K562 (cell line): ENCODE measurements at regions of chr5 and their contacts with region 1.

Region 1: DNA sequence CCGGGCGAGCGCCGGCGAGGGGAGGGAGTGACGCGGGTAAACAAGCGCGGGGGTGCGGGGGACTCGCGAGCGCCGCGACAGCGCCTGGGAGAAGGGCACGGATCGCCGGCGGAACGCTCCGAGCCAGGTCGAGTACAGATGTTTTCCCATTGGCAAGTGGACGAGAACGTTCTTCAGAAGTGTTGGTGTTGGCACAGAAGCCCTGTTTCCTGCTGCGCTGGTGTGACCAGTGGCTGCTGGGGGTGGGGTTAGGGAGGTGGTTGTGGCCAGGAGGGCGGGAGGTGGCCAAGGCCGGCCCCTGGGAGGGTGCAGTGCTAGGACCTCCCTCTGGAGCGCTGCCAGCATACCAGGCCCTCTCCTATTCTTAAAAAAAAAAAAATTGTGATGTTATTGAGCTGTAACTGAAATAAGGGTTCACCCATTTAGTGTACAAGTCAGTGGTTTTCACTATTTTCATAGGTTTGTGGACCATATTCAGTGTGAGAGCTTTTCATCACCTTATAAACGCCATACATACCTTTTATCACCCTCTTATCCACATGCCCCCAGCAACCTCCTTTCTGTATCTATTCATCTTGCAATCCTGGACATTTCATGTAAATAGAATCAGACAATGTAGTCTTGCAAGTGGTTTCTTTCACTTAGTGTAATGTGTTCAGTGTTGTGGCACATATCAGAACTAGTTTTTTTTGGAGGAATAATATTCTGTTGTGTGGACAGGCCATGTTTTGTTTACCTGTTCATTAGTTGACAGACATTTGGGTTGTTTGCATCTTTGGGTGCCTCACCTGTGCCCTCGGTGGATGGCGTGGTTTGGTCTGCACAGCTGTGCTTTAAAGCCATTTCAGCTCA is 1.1 kb downstream of the SQSTM1 start:
- DNase-seq: peak; percentile 81 to 95 (median 88)
- ATAC-seq: peak; percentile 79
- H3K4me3 ChIP-seq: peak overlapping the region; percentile 100
- H3K27ac ChIP-seq: peak overlapping the region; percentile 98
- H3K4me1 ChIP-seq: peaks cover 37 to 72% of the 10 kb centered on the region in 2 experiments
- H3K27me3 ChIP-seq: no peaks in the 10 kb centered on the region
- CTCF ChIP-seq: no peak
- EP300 ChIP-seq: no peak
- POLR2A ChIP-seq: peak; percentile 38
- RAD21 ChIP-seq: no peak; a peak in 1 of 4 replicates

Region 2: DNA sequence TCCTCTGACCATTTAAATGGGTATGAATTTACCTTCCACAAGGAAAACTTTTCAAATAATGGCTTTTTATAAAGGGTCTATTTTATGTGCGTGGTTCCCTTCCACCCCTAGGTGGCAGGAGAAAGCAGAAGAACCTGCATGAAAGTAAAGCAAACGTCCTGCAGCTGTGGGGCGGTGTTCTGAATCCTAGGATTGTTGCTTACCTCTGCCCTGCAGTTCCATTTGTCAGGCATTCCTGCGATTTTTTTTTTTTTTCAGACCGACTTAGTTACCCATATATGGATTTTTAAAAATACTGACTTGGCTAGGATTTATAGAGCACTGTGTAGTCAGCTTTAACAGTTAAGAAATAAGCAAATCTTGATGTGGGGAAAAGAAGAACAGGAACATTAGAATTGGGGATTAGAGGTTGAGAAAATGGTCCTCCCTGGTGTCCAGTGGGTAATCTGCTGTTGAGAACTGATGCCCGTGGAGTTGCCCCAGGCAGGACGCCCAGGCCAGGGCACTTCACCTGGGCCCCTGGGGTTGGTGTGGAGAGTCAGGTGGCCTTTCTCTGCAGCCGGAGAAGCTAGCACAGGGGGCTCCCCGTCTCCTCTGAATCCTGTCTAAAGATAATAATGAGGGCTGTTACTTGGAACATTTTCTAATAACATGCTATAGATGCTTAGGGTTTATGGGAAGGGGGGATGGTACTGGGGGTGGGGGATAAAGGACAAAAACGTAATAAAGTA is 58.4 kb before region 1 on chr5:
- CTCF ChIA-PET with region 1: interaction called, 3 read pairs
- POLR2A ChIA-PET with region 1: interaction called, 4 read pairs
- in situ Hi-C with region 1: no loop called
- intact Hi-C with region 1: loop called (anchors 1 kb)
- DNase-seq: peak; percentile 75 to 84 (median 79)
- ATAC-seq: peak; percentile 82
- H3K4me3 ChIP-seq: no peak overlapping the region
- H3K27ac ChIP-seq: no peak overlapping the region
- H3K4me1 ChIP-seq: peaks cover 27 to 52% of the 10 kb centered on the region in 2 experiments
- H3K27me3 ChIP-seq: no peaks in the 10 kb centered on the region
- CTCF ChIP-seq: peak; percentile 87 to 99 (median 98)
- EP300 ChIP-seq: no peak
- POLR2A ChIP-seq: no peak
- RAD21 ChIP-seq: peak; percentile 73 to 79

Region 3: DNA sequence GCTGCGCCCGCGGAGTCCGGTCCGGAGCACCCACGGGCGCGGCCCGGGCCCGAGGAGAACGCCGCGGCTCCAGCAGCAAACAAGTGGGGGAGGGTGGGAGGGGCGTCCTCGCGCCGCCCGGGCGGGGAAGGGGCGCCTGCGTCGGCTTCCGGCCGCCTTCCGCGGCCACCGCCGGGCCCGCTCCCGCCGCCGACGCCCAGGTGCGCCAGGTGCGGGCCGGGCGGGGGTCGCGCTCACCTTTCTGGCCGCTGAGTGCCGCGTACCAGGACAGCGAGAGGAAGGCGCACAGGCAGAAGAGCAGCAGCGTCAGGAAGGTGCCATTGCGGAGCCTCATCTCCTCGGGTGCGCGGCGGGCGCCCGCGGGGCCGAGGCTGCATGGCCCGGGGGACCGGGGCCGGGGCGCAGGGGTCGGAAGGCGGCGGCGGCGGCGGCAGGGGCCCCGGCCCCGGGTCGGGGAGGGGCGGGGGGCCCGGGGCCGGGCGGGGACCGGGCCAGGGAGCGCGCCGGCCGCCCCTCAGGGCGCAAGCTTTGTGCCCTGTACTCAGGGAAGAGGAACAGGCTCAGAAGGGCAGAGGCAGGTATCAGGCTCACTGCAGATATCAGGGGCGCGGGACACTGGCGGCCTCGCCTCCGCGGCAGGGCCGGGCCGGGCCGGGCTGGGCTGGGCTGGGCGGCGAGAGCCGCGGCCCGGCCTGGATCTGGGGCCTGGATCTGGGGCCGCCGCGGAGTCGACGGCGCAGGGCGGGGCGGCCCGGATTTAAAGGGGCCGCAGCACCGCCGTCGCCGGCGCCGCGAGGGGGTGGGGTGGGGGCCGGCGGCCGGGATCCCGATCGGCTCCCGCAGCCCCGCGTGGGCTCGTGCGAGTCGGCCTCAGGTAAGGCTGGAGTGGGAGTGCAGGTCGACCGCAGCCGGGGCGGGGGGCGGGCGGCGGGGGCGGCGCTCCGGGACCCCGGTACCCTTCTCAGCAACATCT is 15.3 kb before region 1 on chr5 and contains the start of gene MGAT4B:
- CTCF ChIA-PET with region 1: no interaction called
- POLR2A ChIA-PET with region 1: interaction called, 30 read pairs
- in situ Hi-C with region 1: no loop called
- intact Hi-C with region 1: loop called (anchors 2 kb)
- DNase-seq: peak; percentile 80 to 91 (median 84)
- ATAC-seq: peak; percentile 82
- H3K4me3 ChIP-seq: peak within 1 kb of the TSS; percentile 76
- H3K27ac ChIP-seq: peak within 1 kb of the TSS; percentile 88
- H3K4me1 ChIP-seq: peaks cover 23 to 61% of the 10 kb centered on the region in 2 experiments
- H3K27me3 ChIP-seq: no peaks in the 10 kb centered on the region
- CTCF ChIP-seq: no peak
- EP300 ChIP-seq: no peak
- POLR2A ChIP-seq: no peak
- RAD21 ChIP-seq: no peak
- polyA plus RNA-seq, gene MGAT4B: 0.34 to 0.37 TPM

Region 4: DNA sequence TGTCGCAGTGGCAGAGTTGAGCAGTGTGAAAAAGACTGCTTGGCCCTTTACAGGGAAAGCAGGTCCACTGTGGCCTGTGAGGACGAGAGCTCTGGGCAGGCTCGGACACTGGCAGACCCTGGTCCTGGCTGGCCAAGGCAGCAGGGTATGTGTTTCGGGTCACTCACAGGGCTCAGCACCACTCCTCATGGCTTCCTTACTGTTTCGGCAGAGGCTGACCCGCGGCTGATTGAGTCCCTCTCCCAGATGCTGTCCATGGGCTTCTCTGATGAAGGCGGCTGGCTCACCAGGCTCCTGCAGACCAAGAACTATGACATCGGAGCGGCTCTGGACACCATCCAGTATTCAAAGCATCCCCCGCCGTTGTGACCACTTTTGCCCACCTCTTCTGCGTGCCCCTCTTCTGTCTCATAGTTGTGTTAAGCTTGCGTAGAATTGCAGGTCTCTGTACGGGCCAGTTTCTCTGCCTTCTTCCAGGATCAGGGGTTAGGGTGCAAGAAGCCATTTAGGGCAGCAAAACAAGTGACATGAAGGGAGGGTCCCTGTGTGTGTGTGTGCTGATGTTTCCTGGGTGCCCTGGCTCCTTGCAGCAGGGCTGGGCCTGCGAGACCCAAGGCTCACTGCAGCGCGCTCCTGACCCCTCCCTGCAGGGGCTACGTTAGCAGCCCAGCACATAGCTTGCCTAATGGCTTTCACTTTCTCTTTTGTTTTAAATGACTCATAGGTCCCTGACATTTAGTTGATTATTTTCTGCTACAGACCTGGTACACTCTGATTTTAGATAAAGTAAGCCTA is 14.6 kb after region 1 on chr5:
- CTCF ChIA-PET with region 1: no interaction called
- POLR2A ChIA-PET with region 1: interaction called, 15 read pairs
- in situ Hi-C with region 1: no loop called
- intact Hi-C with region 1: no loop called
- DNase-seq: peak in 2 of 4 experiments; percentile 26 to 35
- ATAC-seq: peak; percentile 65
- H3K4me3 ChIP-seq: no peak overlapping the region
- H3K27ac ChIP-seq: no peak overlapping the region; the same call in 2 of the 3 replicates
- H3K4me1 ChIP-seq: peaks cover 0 to 19% of the 10 kb centered on the region in 2 experiments; a peak in 3 of 5 replicates
- H3K27me3 ChIP-seq: no peaks in the 10 kb centered on the region
- CTCF ChIP-seq: peak; percentile 6 to 27 (median 18); a peak in 2 of 6 replicates
- EP300 ChIP-seq: no peak
- POLR2A ChIP-seq: peak; percentile 73
- RAD21 ChIP-seq: peak in 1 of 2 experiments; percentile 6; a peak in 1 of 4 replicates

Region 5: GRCh38 chr5:179858586-179859427 is 37.0 kb after region 1 on chr5 and contains the start of gene MRNIP:
- CTCF ChIA-PET with region 1: no interaction called
- POLR2A ChIA-PET with region 1: interaction called, 3 read pairs
- in situ Hi-C with region 1: no loop called
- intact Hi-C with region 1: loop called (anchors 5 kb)
- DNase-seq: peak; percentile 92 to 98 (median 94)
- ATAC-seq: peak; percentile 98
- H3K4me3 ChIP-seq: peak within 1 kb of the TSS; percentile 94
- H3K27ac ChIP-seq: peak within 1 kb of the TSS; percentile 84
- H3K4me1 ChIP-seq: peaks cover 6 to 25% of the 10 kb centered on the region in 2 experiments; a peak in 4 of 5 replicates
- H3K27me3 ChIP-seq: no peaks in the 10 kb centered on the region
- CTCF ChIP-seq: peak; percentile 14 to 49 (median 17); a peak in 3 of 6 replicates
- EP300 ChIP-seq: no peak
- POLR2A ChIP-seq: peak; percentile 86
- RAD21 ChIP-seq: peak; percentile 38 to 42; a peak in 3 of 4 replicates
- polyA plus RNA-seq, gene MRNIP: 3.6 to 6.2 TPM

Region 6: GRCh38 chr5:180241600-180241999 is 419.8 kb after region 1 on chr5:
- CTCF ChIA-PET with region 1: no interaction called
- POLR2A ChIA-PET with region 1: no interaction called
- in situ Hi-C with region 1: no loop called
- intact Hi-C with region 1: no loop called
- DNase-seq: no peak
- ATAC-seq: no peak
- H3K4me3 ChIP-seq: no peak overlapping the region
- H3K27ac ChIP-seq: no peak overlapping the region
- H3K4me1 ChIP-seq: no peaks in the 10 kb centered on the region
- H3K27me3 ChIP-seq: no peaks in the 10 kb centered on the region
- CTCF ChIP-seq: no peak
- EP300 ChIP-seq: no peak
- POLR2A ChIP-seq: no peak
- RAD21 ChIP-seq: no peak